HepG2 (cell line): ENCODE measurements at regions of chr12 and their contacts with region 1.

Region 1: DNA sequence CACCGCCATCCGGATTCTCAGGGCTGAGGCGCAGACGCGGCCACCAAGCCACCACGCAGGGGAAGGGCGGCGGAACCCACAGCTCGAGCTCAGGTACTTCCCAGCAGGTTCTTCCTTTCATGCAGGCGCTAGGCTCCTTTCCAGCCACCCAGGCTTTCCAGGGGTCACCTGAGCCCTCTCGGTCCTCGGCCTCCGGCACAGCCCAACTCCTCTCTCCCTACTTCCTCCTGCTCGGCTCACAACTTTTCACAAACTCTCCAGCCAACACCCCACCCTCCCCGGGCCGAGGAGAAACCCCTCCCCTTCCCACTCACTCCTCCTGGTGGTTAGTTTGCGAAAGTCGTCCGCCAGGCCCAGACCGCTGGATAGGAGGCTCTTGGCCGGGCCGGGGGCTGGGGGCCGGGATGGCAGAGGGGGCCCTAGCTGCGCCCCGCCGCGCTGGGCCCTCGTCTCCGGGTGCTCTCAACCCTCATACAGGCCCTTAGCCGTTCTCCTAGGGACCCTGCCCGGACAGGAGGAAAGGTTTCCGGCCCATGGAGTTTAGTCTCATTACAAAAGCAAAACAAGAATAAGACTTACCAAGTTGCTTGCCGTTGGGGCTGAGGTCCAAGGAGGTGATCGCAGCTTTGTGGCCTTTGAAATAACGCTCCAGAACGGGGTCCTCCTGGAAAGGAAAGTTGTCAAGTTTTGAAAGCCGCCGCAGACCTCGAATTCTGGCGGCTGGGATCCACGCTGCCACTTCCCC is at the start of gene GALNT4:
- DNase-seq: peak; percentile 81
- ATAC-seq: peak; percentile 90
- H3K4me3 ChIP-seq: peak within 1 kb of the TSS; percentile 86 to 96 (median 95)
- H3K27ac ChIP-seq: peak within 1 kb of the TSS; percentile 81
- H3K4me1 ChIP-seq: peaks cover 55% of the 10 kb centered on the region
- H3K27me3 ChIP-seq: no peaks in the 10 kb centered on the region
- CTCF ChIP-seq: peak; percentile 83
- EP300 ChIP-seq: no peak
- POLR2A ChIP-seq: peak; percentile 62 to 83
- RAD21 ChIP-seq: 0 out of 2 replicates have a peak, but pooled peaks have one; percentile 16
- total RNA-seq, gene GALNT4: 5.2 and 6.8 TPM in 2 replicates

Region 2: GRCh38 chr12:89019408-89020120 is 505.1 kb before region 1 on chr12:
- CTCF ChIA-PET with region 1: interaction called, 14 read pairs
- POLR2A ChIA-PET with region 1: no interaction called
- in situ Hi-C with region 1: loop called (anchors 5 kb)
- intact Hi-C with region 1: loop called (anchors 1 kb)
- DNase-seq: peak; percentile 78
- ATAC-seq: peak; percentile 100
- H3K4me3 ChIP-seq: peak overlapping the region in 2 of 3 experiments; percentile 37 to 41; a peak in 4 of 6 replicates
- H3K27ac ChIP-seq: no peak overlapping the region
- H3K4me1 ChIP-seq: no peaks in the 10 kb centered on the region
- H3K27me3 ChIP-seq: peaks cover 0 to 3% of the 10 kb centered on the region in 2 experiments; a peak in 2 of 5 replicates
- CTCF ChIP-seq: peak; percentile 94
- EP300 ChIP-seq: no peak
- POLR2A ChIP-seq: no peak
- RAD21 ChIP-seq: peak; percentile 77

Region 3: DNA sequence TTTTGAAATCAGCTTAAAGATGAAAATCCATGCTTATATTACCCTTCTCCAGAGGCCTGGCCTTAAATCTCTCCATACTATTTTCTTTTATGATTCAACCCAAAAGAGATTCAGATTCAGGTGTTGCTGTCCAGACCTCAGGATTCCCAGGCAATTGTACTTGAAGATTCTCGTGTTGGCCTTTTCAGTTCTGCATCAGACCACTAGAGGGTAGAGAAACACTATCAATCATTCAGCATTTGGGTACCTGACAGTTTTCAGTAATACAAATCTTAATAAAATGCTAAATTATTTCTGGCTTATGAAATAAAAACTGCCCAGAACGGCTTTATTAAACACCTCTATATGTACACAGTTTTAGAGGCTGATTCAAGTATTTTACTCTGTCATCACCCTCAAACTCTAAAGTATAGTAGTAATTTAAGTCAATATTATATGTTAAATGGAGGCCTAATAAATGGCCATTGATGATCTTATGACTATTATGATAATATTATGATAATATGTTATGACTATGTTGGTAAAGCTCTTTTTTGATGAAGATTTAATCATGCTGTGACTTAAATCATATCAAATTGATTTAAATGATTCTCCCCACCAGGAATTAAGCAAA is 473.5 kb before region 1 on chr12:
- CTCF ChIA-PET with region 1: interaction called, 8 read pairs
- POLR2A ChIA-PET with region 1: no interaction called
- in situ Hi-C with region 1: loop called (anchors 10 kb)
- intact Hi-C with region 1: loop called (anchors 1 kb)
- DNase-seq: peak; percentile 38
- ATAC-seq: peak; percentile 69
- H3K4me3 ChIP-seq: no peak overlapping the region
- H3K27ac ChIP-seq: no peak overlapping the region
- H3K4me1 ChIP-seq: no peaks in the 10 kb centered on the region
- H3K27me3 ChIP-seq: no peaks in the 10 kb centered on the region
- CTCF ChIP-seq: peak; percentile 79
- EP300 ChIP-seq: no peak
- POLR2A ChIP-seq: no peak
- RAD21 ChIP-seq: peak; percentile 65

Region 4: GRCh38 chr12:89384050-89384758 is 140.5 kb before region 1 on chr12:
- CTCF ChIA-PET with region 1: no interaction called
- POLR2A ChIA-PET with region 1: no interaction called
- in situ Hi-C with region 1: no loop called
- intact Hi-C with region 1: loop called (anchors 5 kb)
- DNase-seq: peak; percentile 66
- ATAC-seq: peak; percentile 57
- H3K4me3 ChIP-seq: peak overlapping the region; percentile 0 to 51 (median 51)
- H3K27ac ChIP-seq: peak overlapping the region; percentile 81
- H3K4me1 ChIP-seq: peaks cover 87% of the 10 kb centered on the region
- H3K27me3 ChIP-seq: no peaks in the 10 kb centered on the region
- CTCF ChIP-seq: no peak
- EP300 ChIP-seq: peak in 1 of 2 experiments; percentile 37; a peak in 1 of 4 replicates
- POLR2A ChIP-seq: 0 out of 4 replicates have a peak, but pooled peaks of 1 of the 2 experiments have one; percentile 8
- RAD21 ChIP-seq: no peak

Region 5: GRCh38 chr12:89470741-89471509 is 53.8 kb before region 1 on chr12:
- CTCF ChIA-PET with region 1: interaction called, 50 read pairs
- POLR2A ChIA-PET with region 1: interaction called, 3 read pairs
- in situ Hi-C with region 1: loop called (anchors 5 kb)
- intact Hi-C with region 1: loop called (anchors 1 kb)
- DNase-seq: peak; percentile 58
- ATAC-seq: peak; percentile 89
- H3K4me3 ChIP-seq: no peak overlapping the region
- H3K27ac ChIP-seq: no peak overlapping the region
- H3K4me1 ChIP-seq: no peaks in the 10 kb centered on the region
- H3K27me3 ChIP-seq: no peaks in the 10 kb centered on the region
- CTCF ChIP-seq: peak; percentile 76
- EP300 ChIP-seq: no peak
- POLR2A ChIP-seq: no peak
- RAD21 ChIP-seq: peak; percentile 78

Region 6: DNA sequence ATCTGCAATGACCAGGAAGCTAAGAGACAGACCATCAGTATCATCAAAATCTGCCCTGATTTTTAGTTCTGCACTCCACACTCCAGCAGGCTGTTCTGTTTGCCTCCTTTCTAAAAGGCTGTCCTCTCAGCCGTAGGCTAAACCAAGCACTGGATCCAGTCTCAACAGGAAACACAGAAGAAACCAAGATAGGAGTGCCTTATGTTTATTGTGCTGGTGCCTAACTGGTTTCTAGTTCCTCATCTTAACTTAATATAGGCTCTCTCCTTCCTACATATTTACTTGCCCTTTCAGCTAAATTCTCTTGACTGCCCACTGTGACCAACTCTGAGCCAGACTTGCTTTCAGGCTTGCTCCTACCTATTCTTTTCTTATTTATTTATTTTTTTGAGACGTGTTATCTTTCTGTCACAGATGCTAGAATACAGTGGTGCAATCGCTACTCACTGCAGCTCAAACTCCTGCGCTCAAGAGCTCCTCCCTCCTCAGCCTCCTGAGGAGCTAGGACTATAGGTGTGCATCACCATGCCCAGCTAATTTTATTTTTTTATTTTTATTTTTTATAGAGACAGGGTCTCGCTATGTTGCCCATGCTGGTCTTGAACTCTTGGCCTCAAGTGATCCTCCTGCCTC is 30.9 kb before region 1 on chr12:
- CTCF ChIA-PET with region 1: no interaction called
- POLR2A ChIA-PET with region 1: interaction called, 3 read pairs
- in situ Hi-C with region 1: no loop called
- intact Hi-C with region 1: loop called (anchors 1 kb)
- DNase-seq: no peak
- ATAC-seq: no peak
- H3K4me3 ChIP-seq: no peak overlapping the region
- H3K27ac ChIP-seq: no peak overlapping the region
- H3K4me1 ChIP-seq: peaks cover 17% of the 10 kb centered on the region
- H3K27me3 ChIP-seq: no peaks in the 10 kb centered on the region
- CTCF ChIP-seq: no peak
- EP300 ChIP-seq: no peak
- POLR2A ChIP-seq: no peak
- RAD21 ChIP-seq: no peak

Region 7: GRCh38 chr12:89949457-89950195 is 424.9 kb after region 1 on chr12:
- CTCF ChIA-PET with region 1: no interaction called
- POLR2A ChIA-PET with region 1: no interaction called
- in situ Hi-C with region 1: loop called (anchors 25 kb)
- intact Hi-C with region 1: no loop called
- DNase-seq: peak; percentile 9
- ATAC-seq: 0 out of 3 replicates have a peak, but pooled peaks have one; percentile 38
- H3K4me3 ChIP-seq: no peak overlapping the region
- H3K27ac ChIP-seq: no peak overlapping the region
- H3K4me1 ChIP-seq: no peaks in the 10 kb centered on the region
- H3K27me3 ChIP-seq: no peaks in the 10 kb centered on the region
- CTCF ChIP-seq: no peak
- EP300 ChIP-seq: no peak
- POLR2A ChIP-seq: no peak
- RAD21 ChIP-seq: no peak